ENCODE measurements at regions of chr1 and their contacts with region 1.

Region 1: DNA sequence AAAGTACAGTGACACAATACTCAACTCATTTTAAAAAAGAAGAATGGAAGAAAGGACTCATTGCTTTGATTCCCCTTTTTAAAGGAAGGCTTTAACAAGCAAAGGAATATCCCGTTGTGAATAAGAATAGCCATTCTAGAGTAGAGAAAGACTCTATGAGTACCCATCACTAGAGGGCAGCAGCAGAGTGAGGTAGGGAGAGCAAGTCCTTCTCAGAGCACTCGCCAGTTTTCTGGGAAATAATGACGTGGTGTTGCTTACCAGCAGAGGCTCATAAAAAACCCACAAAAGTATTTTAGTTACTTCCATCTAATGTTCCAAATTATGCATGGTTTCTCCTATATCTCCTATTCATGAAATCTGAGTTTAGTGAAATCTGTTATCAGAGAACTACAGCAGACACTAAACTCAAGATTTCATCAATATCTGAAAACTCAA is 74.6 kb downstream of the USP24 start:
- DNase-seq: peak; percentile 70 to 79 (median 73)
- H3K4me3 ChIP-seq: no peak overlapping the region
- H3K4me3 Mint-ChIP-seq: no peak overlapping the region
- H3K27ac ChIP-seq: no peak overlapping the region
- H3K27ac Mint-ChIP-seq: peak overlapping the region; percentile 19 to 90 (median 70)
- H3K4me1 ChIP-seq: no peaks in the 10 kb centered on the region
- H3K4me1 Mint-ChIP-seq: peaks cover 5 to 12% (median 8%) of the 10 kb centered on the region in 4 donors
- H3K27me3 ChIP-seq: no peaks in the 10 kb centered on the region
- H3K27me3 Mint-ChIP-seq: no peaks in the 10 kb centered on the region

Region 2: GRCh38 chr1:54973205-54973921 is 167.2 kb before region 1 on chr1:
- CTCF ChIA-PET with region 1: no interaction called
- POLR2A ChIA-PET with region 1: no interaction called
- intact Hi-C with region 1: no loop called
- DNase-seq: no peak
- H3K4me3 ChIP-seq: no peak overlapping the region
- H3K4me3 Mint-ChIP-seq: no peak overlapping the region
- H3K27ac ChIP-seq: no peak overlapping the region
- H3K27ac Mint-ChIP-seq: no peak overlapping the region
- H3K4me1 ChIP-seq: no peaks in the 10 kb centered on the region
- H3K4me1 Mint-ChIP-seq: no peaks in the 10 kb centered on the region
- H3K27me3 ChIP-seq: no peaks in the 10 kb centered on the region
- H3K27me3 Mint-ChIP-seq: peaks cover 18 to 28% of the 10 kb centered on the region in 2 donors

Region 3: DNA sequence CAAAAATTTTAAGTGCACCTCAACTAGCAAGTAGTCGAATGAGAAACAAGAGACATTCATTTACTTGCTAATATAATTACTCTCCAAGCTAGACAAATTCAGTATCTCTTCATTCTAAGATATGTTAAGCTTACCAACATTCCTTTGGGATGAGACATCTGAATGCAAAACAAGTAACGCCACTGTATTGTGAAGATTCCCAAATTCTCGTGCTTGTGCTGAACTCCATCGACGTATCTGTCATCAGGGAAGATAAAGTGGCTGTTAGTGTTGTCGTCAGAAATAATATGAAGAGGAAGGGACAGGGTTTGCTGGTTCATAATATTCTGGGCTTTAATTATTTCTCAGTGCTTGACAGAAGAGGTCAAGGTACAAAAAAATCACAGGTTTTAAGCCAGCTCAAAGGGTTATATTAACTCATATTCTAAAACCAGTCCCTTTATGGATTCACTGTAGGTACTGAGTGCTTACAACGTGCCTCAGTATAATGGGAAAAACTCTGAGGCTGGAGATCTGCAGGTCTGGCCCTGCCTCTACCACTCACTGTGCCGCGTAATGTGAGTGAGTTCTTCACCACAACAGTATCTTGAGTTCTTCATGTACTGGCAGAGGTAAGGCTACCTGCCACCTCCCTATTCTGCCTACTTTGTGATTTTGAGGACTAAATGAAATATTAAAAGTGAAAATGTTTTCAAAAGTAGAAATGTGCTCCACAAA is 59.2 kb before region 1 on chr1:
- CTCF ChIA-PET with region 1: no interaction called
- POLR2A ChIA-PET with region 1: no interaction called
- intact Hi-C with region 1: no loop called
- DNase-seq: no peak
- H3K4me3 ChIP-seq: no peak overlapping the region
- H3K4me3 Mint-ChIP-seq: no peak overlapping the region
- H3K27ac ChIP-seq: no peak overlapping the region
- H3K27ac Mint-ChIP-seq: peak overlapping the region in 1 of 7 donors; percentile 20
- H3K4me1 ChIP-seq: no peaks in the 10 kb centered on the region
- H3K4me1 Mint-ChIP-seq: no peaks in the 10 kb centered on the region
- H3K27me3 ChIP-seq: no peaks in the 10 kb centered on the region
- H3K27me3 Mint-ChIP-seq: no peaks in the 10 kb centered on the region

Region 4: GRCh38 chr1:55277377-55278130 is 137.0 kb after region 1 on chr1:
- CTCF ChIA-PET with region 1: interaction called, 180 read pairs
- POLR2A ChIA-PET with region 1: no interaction called
- intact Hi-C with region 1: loop called (anchors 1 kb)
- DNase-seq: peak; percentile 60 to 71 (median 63)
- H3K4me3 ChIP-seq: no peak overlapping the region
- H3K4me3 Mint-ChIP-seq: peak overlapping the region in 2 of 8 donors; percentile 11 to 45
- H3K27ac ChIP-seq: no peak overlapping the region
- H3K27ac Mint-ChIP-seq: peak overlapping the region in 4 of 7 donors; percentile 11 to 50 (median 26)
- H3K4me1 ChIP-seq: peaks cover 4% of the 10 kb centered on the region
- H3K4me1 Mint-ChIP-seq: peaks cover 2 to 5% (median 4%) of the 10 kb centered on the region in 4 donors
- H3K27me3 ChIP-seq: no peaks in the 10 kb centered on the region
- H3K27me3 Mint-ChIP-seq: peaks cover 1 to 4% of the 10 kb centered on the region in 2 donors

Region 5: GRCh38 chr1:55337801-55338447 is 197.4 kb after region 1 on chr1:
- CTCF ChIA-PET with region 1: no interaction called
- POLR2A ChIA-PET with region 1: no interaction called
- intact Hi-C with region 1: loop called (anchors 1 kb)
- DNase-seq: no peak
- H3K4me3 ChIP-seq: no peak overlapping the region
- H3K4me3 Mint-ChIP-seq: no peak overlapping the region
- H3K27ac ChIP-seq: no peak overlapping the region
- H3K27ac Mint-ChIP-seq: no peak overlapping the region
- H3K4me1 ChIP-seq: no peaks in the 10 kb centered on the region
- H3K4me1 Mint-ChIP-seq: no peaks in the 10 kb centered on the region
- H3K27me3 ChIP-seq: no peaks in the 10 kb centered on the region
- H3K27me3 Mint-ChIP-seq: peaks cover 0 to 2% of the 10 kb centered on the region in 2 donors